H1 (cell line): ENCODE measurements at regions of chr7 and their contacts with region 1.

Region 1: DNA sequence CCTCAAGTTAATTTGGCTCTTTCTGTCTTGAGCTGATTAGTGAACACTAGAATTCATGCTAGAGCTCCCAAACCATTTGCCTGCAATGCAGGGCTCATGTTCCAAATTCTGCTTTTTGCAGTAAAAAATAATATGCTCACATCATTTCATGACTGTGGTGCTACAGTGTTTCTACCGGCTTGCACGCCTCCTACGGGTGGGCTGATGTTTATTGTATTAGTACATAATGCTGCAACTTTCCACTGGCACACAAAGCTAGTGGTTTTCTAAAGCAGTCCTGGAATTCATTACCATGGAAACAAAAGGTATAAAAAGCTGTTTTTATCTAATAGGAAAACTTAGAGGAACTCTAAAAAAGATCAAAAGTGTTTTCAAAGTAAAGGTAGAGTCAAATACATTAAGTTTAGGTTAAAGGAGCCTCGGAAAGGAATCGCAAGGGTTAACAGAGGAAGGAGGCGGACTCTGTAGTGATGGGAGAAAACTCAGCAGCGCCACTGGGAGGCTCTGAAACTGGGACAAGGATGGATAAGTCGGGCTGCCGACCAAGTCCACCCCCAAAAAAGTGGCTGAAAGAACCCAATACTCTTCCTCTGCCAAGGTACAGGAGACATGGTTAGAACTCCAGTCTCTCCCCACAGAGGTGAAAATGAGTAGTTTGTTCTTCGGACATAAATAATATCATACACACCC is 25.9 kb downstream of the GRM8 start:
- DNase-seq: peak in 1 of 2 experiments; percentile 51
- H3K4me3 ChIP-seq: no peak overlapping the region
- H3K27ac ChIP-seq: no peak overlapping the region
- H3K4me1 ChIP-seq: no peaks in the 10 kb centered on the region; a peak in 1 of 7 replicates
- H3K27me3 ChIP-seq: no peaks in the 10 kb centered on the region
- CTCF ChIP-seq: peak in 1 of 3 experiments; percentile 12; a peak in 2 of 4 replicates
- EP300 ChIP-seq: no peak
- POLR2A ChIP-seq: no peak
- RAD21 ChIP-seq: peak in 1 of 2 experiments; percentile 19; a peak in 1 of 4 replicates

Region 2: GRCh38 chr7:127177156-127177555 is 49.7 kb before region 1 on chr7:
- CTCF ChIA-PET with region 1: no interaction called
- POLR2A ChIA-PET with region 1: no interaction called
- DNase-seq: no peak
- H3K4me3 ChIP-seq: no peak overlapping the region
- H3K27ac ChIP-seq: no peak overlapping the region
- H3K4me1 ChIP-seq: no peaks in the 10 kb centered on the region
- H3K27me3 ChIP-seq: no peaks in the 10 kb centered on the region
- CTCF ChIP-seq: no peak
- EP300 ChIP-seq: no peak
- POLR2A ChIP-seq: no peak
- RAD21 ChIP-seq: no peak

Region 3: GRCh38 chr7:127214956-127215718 is 11.7 kb before region 1 on chr7:
- CTCF ChIA-PET with region 1: interaction called, 27 read pairs
- POLR2A ChIA-PET with region 1: no interaction called
- DNase-seq: no peak
- H3K4me3 ChIP-seq: no peak overlapping the region
- H3K27ac ChIP-seq: no peak overlapping the region
- H3K4me1 ChIP-seq: peaks cover 0 to 4% (median 0%) of the 10 kb centered on the region in 4 experiments; a peak in 1 of 7 replicates
- H3K27me3 ChIP-seq: no peaks in the 10 kb centered on the region
- CTCF ChIP-seq: no peak
- EP300 ChIP-seq: no peak
- POLR2A ChIP-seq: no peak
- RAD21 ChIP-seq: no peak

Region 4: GRCh38 chr7:127239814-127240213 is 13.0 kb after region 1 on chr7:
- CTCF ChIA-PET with region 1: interaction called, 22 read pairs
- POLR2A ChIA-PET with region 1: no interaction called
- DNase-seq: peak in 1 of 2 experiments; percentile 53
- H3K4me3 ChIP-seq: no peak overlapping the region
- H3K27ac ChIP-seq: no peak overlapping the region
- H3K4me1 ChIP-seq: no peaks in the 10 kb centered on the region
- H3K27me3 ChIP-seq: no peaks in the 10 kb centered on the region
- CTCF ChIP-seq: peak; percentile 33 to 74 (median 72); a peak in 2 of 4 replicates
- EP300 ChIP-seq: no peak
- POLR2A ChIP-seq: no peak
- RAD21 ChIP-seq: peak; percentile 42 to 49; a peak in 3 of 4 replicates